ENCODE measurements at regions of chr18 and their contacts with region 1.

Region 1: DNA sequence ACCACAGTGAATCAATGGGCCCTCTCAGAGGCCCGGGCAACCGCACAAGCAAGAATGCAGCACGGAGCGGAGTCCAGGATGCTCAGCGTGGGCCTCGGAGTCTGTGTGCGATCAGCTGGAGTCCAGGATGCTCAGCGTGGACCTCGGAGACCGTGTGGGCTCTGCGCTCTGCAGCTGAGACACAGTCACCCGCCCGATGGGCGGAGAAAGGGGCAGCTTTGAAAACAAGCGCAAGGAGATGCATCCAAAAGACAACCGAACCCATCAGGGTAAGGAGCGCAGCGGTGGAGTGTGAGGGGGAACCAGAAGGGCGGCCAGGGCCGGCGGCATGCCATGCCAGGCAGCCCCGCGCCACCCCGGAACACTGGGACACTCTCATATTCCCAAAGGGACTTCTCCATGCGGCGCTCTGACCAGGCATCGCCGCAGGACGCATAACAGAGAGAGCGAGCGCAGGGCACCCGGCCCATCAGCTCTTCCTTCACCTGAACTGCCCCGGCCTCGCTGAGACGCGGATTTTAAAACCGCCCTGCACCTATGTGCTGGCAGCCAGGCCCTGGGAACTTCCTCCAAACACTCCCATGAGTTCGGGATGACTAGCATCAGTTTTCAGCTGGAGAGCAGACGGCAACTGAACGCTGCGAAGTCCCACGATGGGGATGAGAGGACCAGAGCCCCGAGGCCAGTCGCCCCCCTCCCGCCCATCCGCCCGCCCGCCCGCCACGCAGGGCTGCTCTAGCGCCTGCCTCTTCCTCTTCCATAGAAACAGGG is 44.7 kb downstream of the MC5R start:
- DNase-seq: no peak
- ATAC-seq: no peak
- H3K4me3 ChIP-seq: no peak overlapping the region
- H3K27ac ChIP-seq: no peak overlapping the region
- H3K4me1 ChIP-seq: no peaks in the 10 kb centered on the region
- H3K27me3 ChIP-seq: peaks cover 10 to 29% (median 15%) of the 10 kb centered on the region in 3 donors
- CTCF ChIP-seq: no peak
- POLR2A ChIP-seq: no peak

Region 2: GRCh38 chr18:13849526-13850170 is 19.0 kb before region 1 on chr18:
- in situ Hi-C with region 1: no loop called
- intact Hi-C with region 1: no loop called
- DNase-seq: no peak
- ATAC-seq: no peak
- H3K4me3 ChIP-seq: no peak overlapping the region
- H3K27ac ChIP-seq: no peak overlapping the region
- H3K4me1 ChIP-seq: no peaks in the 10 kb centered on the region
- H3K27me3 ChIP-seq: no peaks in the 10 kb centered on the region
- CTCF ChIP-seq: no peak
- POLR2A ChIP-seq: no peak

Region 3: GRCh38 chr18:13973056-13973575 is 104.4 kb after region 1 on chr18:
- in situ Hi-C with region 1: loop called in 1 of 4 experiments (anchors 25 kb)
- intact Hi-C with region 1: no loop called
- DNase-seq: no peak
- ATAC-seq: no peak
- H3K4me3 ChIP-seq: no peak overlapping the region
- H3K27ac ChIP-seq: no peak overlapping the region
- H3K4me1 ChIP-seq: no peaks in the 10 kb centered on the region
- H3K27me3 ChIP-seq: no peaks in the 10 kb centered on the region
- CTCF ChIP-seq: no peak
- POLR2A ChIP-seq: no peak